ENCODE measurements at regions of chr3 and their contacts with region 1.

Region 1: GRCh38 chr3:120095226-120095978 is 1.2 kb upstream of the GSK3B start:
- DNase-seq: peak; percentile 71 to 90 (median 79)
- ATAC-seq: peak; percentile 37
- H3K4me3 ChIP-seq: peak overlapping the region; percentile 69
- H3K4me3 Mint-ChIP-seq: no peak overlapping the region
- H3K27ac ChIP-seq: peak overlapping the region; percentile 92
- H3K27ac Mint-ChIP-seq: peak overlapping the region in 1 of 9 donors; percentile 99
- H3K4me1 ChIP-seq: peaks cover 11 to 26% of the 10 kb centered on the region in 2 donors
- H3K4me1 Mint-ChIP-seq: peaks cover 16 to 38% (median 31%) of the 10 kb centered on the region in 7 donors
- H3K27me3 ChIP-seq: no peaks in the 10 kb centered on the region
- H3K27me3 Mint-ChIP-seq: peaks cover 0 to 5% (median 0%) of the 10 kb centered on the region in 5 donors

Region 2: DNA sequence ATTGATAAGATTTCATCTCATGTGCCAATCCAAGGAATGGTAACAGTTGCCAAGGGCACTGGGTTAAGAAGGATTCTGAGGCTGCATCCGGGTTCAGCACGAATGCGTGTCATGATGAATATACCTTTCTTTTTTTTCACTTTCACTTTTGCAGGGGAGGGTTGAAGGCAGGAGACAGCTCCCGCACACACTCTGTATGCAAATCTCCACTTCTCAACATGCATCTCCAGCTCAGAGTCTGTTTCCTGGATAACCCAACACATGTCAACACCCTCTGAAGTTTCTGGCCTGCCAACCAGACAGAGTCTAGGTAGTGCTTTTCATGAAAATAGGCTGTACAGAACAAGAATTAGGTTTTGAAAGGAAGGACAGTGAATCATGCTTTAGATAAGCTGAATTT is 876.3 kb before region 1 on chr3:
- CTCF ChIA-PET with region 1: no interaction called
- POLR2A ChIA-PET with region 1: no interaction called
- intact Hi-C with region 1: loop called in 1 of 2 experiments (anchors 1 kb)
- DNase-seq: peak in 7 of 9 donors; percentile 65 to 87 (median 76)
- ATAC-seq: peak; percentile 96
- H3K4me3 ChIP-seq: peak overlapping the region; percentile 34
- H3K4me3 Mint-ChIP-seq: peak overlapping the region; percentile 54 to 87 (median 70)
- H3K27ac ChIP-seq: peak overlapping the region; percentile 68
- H3K27ac Mint-ChIP-seq: peak overlapping the region; percentile 90 to 99 (median 94)
- H3K4me1 ChIP-seq: peaks cover 9 to 25% of the 10 kb centered on the region in 2 donors
- H3K4me1 Mint-ChIP-seq: peaks cover 22 to 84% (median 71%) of the 10 kb centered on the region in 7 donors
- H3K27me3 ChIP-seq: no peaks in the 10 kb centered on the region
- H3K27me3 Mint-ChIP-seq: no peaks in the 10 kb centered on the region

Region 3: DNA sequence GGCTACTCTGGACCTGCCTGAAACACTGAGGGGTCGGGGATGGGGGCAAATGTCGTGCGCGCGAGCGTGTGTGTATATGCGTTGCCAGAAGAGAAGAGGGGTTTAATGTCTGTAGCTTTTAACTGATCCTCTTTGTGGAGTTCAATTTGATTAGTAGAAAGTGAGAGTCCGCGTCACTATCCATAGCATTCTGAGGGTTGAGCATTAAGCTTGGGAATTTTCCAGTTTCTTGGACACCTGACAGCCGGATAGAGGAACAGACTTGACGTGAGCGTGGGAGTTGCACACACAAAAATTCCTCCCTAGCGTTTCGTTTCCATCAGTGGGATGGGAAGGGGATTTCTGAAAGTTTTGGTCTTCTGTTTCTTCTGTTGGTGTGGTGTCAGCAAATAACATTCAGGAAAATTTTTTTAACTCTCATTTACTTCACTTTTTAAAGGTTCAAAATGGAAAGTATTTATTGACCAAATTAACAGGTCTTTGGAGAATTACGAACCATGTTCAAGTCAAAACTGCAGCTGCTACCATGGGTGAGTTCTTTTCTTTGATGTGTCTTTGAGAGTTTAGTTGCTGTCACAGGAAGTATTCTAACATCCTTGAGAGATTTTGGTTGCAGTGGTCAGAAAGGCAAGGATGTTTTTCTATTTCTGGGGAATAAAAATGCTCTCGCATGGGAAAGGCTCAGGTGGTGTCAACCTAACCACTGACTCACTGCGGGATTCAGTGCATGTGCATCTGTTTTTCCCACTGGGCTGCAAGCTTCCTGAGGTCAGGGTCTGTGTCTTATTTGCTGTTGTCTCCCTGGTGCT is 625.8 kb before region 1 on chr3:
- CTCF ChIA-PET with region 1: no interaction called
- POLR2A ChIA-PET with region 1: interaction called, 5 read pairs
- intact Hi-C with region 1: loop called in 1 of 2 experiments (anchors 1 kb)
- DNase-seq: peak in 7 of 9 donors; percentile 10 to 32 (median 24)
- ATAC-seq: peak; percentile 48
- H3K4me3 ChIP-seq: peak overlapping the region; percentile 86
- H3K4me3 Mint-ChIP-seq: peak overlapping the region; percentile 90 to 97 (median 94)
- H3K27ac ChIP-seq: peak overlapping the region; percentile 88
- H3K27ac Mint-ChIP-seq: peak overlapping the region; percentile 83 to 95 (median 89)
- H3K4me1 ChIP-seq: peaks cover 12% of the 10 kb centered on the region in 2 donors
- H3K4me1 Mint-ChIP-seq: peaks cover 27 to 35% (median 30%) of the 10 kb centered on the region in 7 donors
- H3K27me3 ChIP-seq: no peaks in the 10 kb centered on the region
- H3K27me3 Mint-ChIP-seq: no peaks in the 10 kb centered on the region

Region 4: GRCh38 chr3:119810018-119810435 is 285.4 kb before region 1 on chr3:
- CTCF ChIA-PET with region 1: no interaction called
- POLR2A ChIA-PET with region 1: interaction called, 10 read pairs
- intact Hi-C with region 1: no loop called
- DNase-seq: peak; percentile 17 to 57 (median 49)
- ATAC-seq: peak; percentile 83
- H3K4me3 ChIP-seq: peak overlapping the region; percentile 80
- H3K4me3 Mint-ChIP-seq: peak overlapping the region; percentile 82 to 94 (median 88)
- H3K27ac ChIP-seq: peak overlapping the region; percentile 33
- H3K27ac Mint-ChIP-seq: peak overlapping the region; percentile 44 to 93 (median 81)
- H3K4me1 ChIP-seq: peaks cover 0 to 8% of the 10 kb centered on the region in 2 donors
- H3K4me1 Mint-ChIP-seq: peaks cover 0 to 13% (median 10%) of the 10 kb centered on the region in 7 donors
- H3K27me3 ChIP-seq: no peaks in the 10 kb centered on the region
- H3K27me3 Mint-ChIP-seq: peaks cover 0 to 11% (median 0%) of the 10 kb centered on the region in 5 donors

Region 5: DNA sequence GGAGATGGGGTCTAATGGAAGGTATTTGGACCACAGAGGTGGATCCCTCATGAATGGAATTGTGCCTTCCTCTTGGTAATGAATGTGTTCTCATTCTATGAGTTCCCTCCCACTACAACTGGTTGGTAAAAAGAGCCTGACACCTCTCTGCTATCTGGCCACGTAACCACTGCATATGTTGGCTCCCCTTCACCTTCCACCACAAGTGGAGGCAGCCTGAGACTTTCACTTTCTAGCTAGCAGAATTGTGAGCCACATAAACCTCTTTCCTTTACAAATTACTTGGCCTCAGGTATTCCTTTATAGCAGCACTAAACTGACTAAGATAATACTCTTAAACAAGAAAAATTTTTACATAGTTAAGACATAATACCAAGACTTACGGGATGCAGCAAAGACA is 158.2 kb before region 1 on chr3:
- CTCF ChIA-PET with region 1: no interaction called
- POLR2A ChIA-PET with region 1: no interaction called
- intact Hi-C with region 1: loop called in 1 of 2 experiments (anchors 1 kb)
- DNase-seq: peak in 3 of 9 donors; percentile 8 to 49 (median 12)
- ATAC-seq: peak; percentile 73
- H3K4me3 ChIP-seq: no peak overlapping the region
- H3K4me3 Mint-ChIP-seq: peak overlapping the region; percentile 21 to 84 (median 42)
- H3K27ac ChIP-seq: no peak overlapping the region
- H3K27ac Mint-ChIP-seq: peak overlapping the region; percentile 4 to 83 (median 37)
- H3K4me1 ChIP-seq: peaks cover 0 to 11% of the 10 kb centered on the region in 2 donors
- H3K4me1 Mint-ChIP-seq: peaks cover 19 to 78% (median 68%) of the 10 kb centered on the region in 7 donors
- H3K27me3 ChIP-seq: no peaks in the 10 kb centered on the region
- H3K27me3 Mint-ChIP-seq: no peaks in the 10 kb centered on the region

Region 6: DNA sequence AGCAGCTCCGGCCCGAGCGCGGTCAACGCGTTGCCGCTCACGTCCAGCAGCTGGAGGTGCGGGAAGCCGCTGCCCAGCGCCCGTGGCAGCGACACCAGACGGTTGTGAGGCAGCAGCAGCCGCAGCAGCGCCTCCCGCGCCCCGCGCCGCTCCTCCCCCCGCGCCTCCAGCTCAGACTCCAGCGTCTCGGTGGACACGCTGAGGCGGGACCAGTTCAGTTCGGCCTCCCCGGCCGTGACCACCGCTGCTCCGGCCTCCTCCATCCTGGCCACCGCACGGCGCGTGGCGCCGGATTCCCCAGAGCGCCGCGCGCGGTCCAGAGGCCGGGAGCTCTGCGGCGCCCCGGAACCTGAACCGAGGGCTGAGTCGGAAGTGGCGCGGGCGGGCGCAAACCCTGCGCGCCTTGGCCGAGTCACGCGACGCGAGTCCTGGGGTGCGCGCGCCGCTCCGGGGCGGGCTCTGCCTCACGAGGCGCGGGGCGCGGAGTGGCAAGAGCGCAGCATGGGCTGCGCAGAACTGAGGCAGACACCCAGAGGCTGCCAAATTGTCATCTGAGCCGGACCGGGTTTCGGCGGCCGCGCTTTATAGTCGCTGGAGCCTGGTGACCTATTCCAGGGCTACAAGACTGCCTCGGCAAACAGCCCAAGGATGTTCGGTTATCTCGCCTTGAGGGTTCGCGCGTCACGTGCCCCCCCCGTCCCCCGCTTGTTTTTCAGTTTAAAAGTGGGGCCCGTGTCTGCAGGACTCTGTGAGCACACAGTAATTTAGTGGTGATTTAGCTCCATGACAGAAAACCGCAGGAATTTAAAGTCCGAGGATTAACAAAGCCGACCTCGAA is 253.8 kb after region 1 on chr3 and contains the start of gene LRRC58:
- CTCF ChIA-PET with region 1: no interaction called
- POLR2A ChIA-PET with region 1: interaction called, 29 read pairs
- intact Hi-C with region 1: loop called (anchors 1 kb)
- DNase-seq: peak; percentile 85 to 95 (median 94)
- ATAC-seq: peak; percentile 95
- H3K4me3 ChIP-seq: peak within 1 kb of the TSS; percentile 91
- H3K4me3 Mint-ChIP-seq: peak within 1 kb of the TSS; percentile 85 to 96 (median 94)
- H3K27ac ChIP-seq: peak within 1 kb of the TSS; percentile 76
- H3K27ac Mint-ChIP-seq: peak within 1 kb of the TSS; percentile 87 to 97 (median 93)
- H3K4me1 ChIP-seq: peaks cover 20 to 26% of the 10 kb centered on the region in 2 donors
- H3K4me1 Mint-ChIP-seq: peaks cover 39 to 54% (median 48%) of the 10 kb centered on the region in 7 donors
- H3K27me3 ChIP-seq: no peaks in the 10 kb centered on the region
- H3K27me3 Mint-ChIP-seq: peaks cover 0 to 29% (median 0%) of the 10 kb centered on the region in 5 donors
- total RNA-seq, gene LRRC58: 12.3 to 24.1 (median 20.8) TPM

Region 7: GRCh38 chr3:121431726-121432517 is 1336.5 kb after region 1 on chr3:
- CTCF ChIA-PET with region 1: no interaction called
- POLR2A ChIA-PET with region 1: no interaction called
- intact Hi-C with region 1: loop called (anchors 5 to 10 kb)
- DNase-seq: peak in 8 of 9 donors; percentile 36 to 80 (median 74)
- ATAC-seq: peak; percentile 89
- H3K4me3 ChIP-seq: peak overlapping the region; percentile 52
- H3K4me3 Mint-ChIP-seq: peak overlapping the region; percentile 46 to 84 (median 76)
- H3K27ac ChIP-seq: peak overlapping the region; percentile 33
- H3K27ac Mint-ChIP-seq: peak overlapping the region; percentile 48 to 92 (median 84)
- H3K4me1 ChIP-seq: peaks cover 0 to 9% of the 10 kb centered on the region in 2 donors
- H3K4me1 Mint-ChIP-seq: peaks cover 6 to 31% (median 24%) of the 10 kb centered on the region in 7 donors
- H3K27me3 ChIP-seq: no peaks in the 10 kb centered on the region
- H3K27me3 Mint-ChIP-seq: no peaks in the 10 kb centered on the region

Measured in naive thymus-derived CD4-positive, alpha-beta T cell (primary cell).